ENCODE measurements at regions of chr15 and their contacts with region 1.

Region 1: DNA sequence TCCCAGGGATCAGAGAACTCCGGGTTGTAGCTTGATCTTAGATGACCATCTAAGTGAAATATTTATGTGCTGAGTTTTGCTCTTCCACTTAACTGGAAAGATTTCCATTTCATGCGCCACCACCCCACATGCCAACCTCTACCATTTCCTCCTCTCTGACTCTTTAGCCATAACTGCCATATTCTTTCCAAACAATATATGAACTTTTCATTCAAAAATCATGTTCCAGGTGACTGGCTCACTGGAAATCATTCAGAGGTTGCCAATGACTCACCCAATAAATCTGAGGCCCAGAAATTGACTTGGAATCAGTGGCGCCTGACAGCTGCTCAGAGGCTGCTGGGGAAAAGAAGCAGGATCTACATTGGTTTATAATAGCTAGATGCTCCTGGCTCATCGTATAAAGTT is 31.6 kb upstream of the FAM174B start:
- DNase-seq: no peak
- ATAC-seq: no peak
- H3K4me3 ChIP-seq: no peak overlapping the region
- H3K27ac ChIP-seq: no peak overlapping the region
- H3K4me1 ChIP-seq: no peaks in the 10 kb centered on the region
- H3K27me3 ChIP-seq: no peaks in the 10 kb centered on the region
- CTCF ChIP-seq: no peak
- POLR2A ChIP-seq: no peak

Region 2: DNA sequence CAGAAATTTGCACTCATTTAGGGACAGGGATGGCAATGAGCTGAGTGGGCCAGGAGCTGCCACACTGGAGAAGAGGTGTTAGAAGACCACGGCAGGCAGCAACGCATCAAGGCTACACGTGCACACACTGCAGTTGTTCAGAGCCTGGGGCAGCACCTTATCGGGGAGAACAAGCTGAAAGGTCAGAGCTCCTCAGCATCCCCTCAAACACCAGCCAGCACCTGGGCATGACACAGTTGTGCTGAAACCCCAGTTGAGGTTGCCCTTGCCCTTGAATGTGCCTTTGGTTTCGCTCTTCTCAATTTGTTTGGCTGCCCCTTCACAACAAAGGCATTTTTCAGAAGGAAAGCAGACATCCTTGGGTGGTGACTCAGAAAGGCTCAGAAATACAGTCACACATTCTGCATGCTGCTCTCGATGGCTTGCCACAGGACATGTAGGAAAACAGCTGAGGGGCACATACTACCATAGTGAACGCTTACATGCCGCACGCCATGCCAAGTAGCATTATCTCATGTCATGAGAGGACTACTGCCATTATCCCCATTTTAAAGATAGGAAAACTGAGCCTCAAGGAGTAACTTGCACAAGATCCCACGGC is 235.9 kb before region 1 on chr15:
- intact Hi-C with region 1: no loop called
- DNase-seq: no peak
- ATAC-seq: no peak
- H3K4me3 ChIP-seq: no peak overlapping the region
- H3K27ac ChIP-seq: no peak overlapping the region
- H3K4me1 ChIP-seq: no peaks in the 10 kb centered on the region
- H3K27me3 ChIP-seq: no peaks in the 10 kb centered on the region
- CTCF ChIP-seq: no peak
- POLR2A ChIP-seq: no peak

Region 3: GRCh38 chr15:92519709-92520108 is 167.5 kb before region 1 on chr15:
- intact Hi-C with region 1: loop called (anchors 5 kb)
- DNase-seq: no peak
- ATAC-seq: no peak
- H3K4me3 ChIP-seq: no peak overlapping the region
- H3K27ac ChIP-seq: no peak overlapping the region
- H3K4me1 ChIP-seq: no peaks in the 10 kb centered on the region
- H3K27me3 ChIP-seq: no peaks in the 10 kb centered on the region
- CTCF ChIP-seq: no peak
- POLR2A ChIP-seq: no peak

Region 4: GRCh38 chr15:92578096-92578835 is 108.9 kb before region 1 on chr15:
- intact Hi-C with region 1: no loop called
- DNase-seq: no peak
- ATAC-seq: no peak
- H3K4me3 ChIP-seq: no peak overlapping the region
- H3K27ac ChIP-seq: no peak overlapping the region
- H3K4me1 ChIP-seq: no peaks in the 10 kb centered on the region
- H3K27me3 ChIP-seq: no peaks in the 10 kb centered on the region
- CTCF ChIP-seq: no peak
- POLR2A ChIP-seq: no peak

Measured in body of pancreas (tissue), 4 donors.